PC-9 (cell line): ENCODE measurements at regions of chr2 and their contacts with region 1.

Region 1: GRCh38 chr2:9813312-9814133 is 29.8 kb upstream of the TAF1B start:
- DNase-seq: peak; percentile 23 to 67
- H3K4me3 ChIP-seq: no peak overlapping the region
- H3K27ac ChIP-seq: no peak overlapping the region
- H3K4me1 ChIP-seq: peaks cover 52% of the 10 kb centered on the region
- H3K27me3 ChIP-seq: no peaks in the 10 kb centered on the region
- CTCF ChIP-seq: peak; percentile 97

Region 2: GRCh38 chr2:9830690-9831410 is 17.3 kb after region 1 on chr2:
- CTCF ChIA-PET with region 1: no interaction called
- POLR2A ChIA-PET with region 1: no interaction called
- intact Hi-C with region 1: loop called (anchors 2 kb)
- DNase-seq: peak; percentile 31 to 53
- H3K4me3 ChIP-seq: peak overlapping the region; percentile 41; the same call in 1 of the 2 replicates
- H3K27ac ChIP-seq: peak overlapping the region; percentile 84
- H3K4me1 ChIP-seq: peaks cover 49% of the 10 kb centered on the region
- H3K27me3 ChIP-seq: no peaks in the 10 kb centered on the region
- CTCF ChIP-seq: no peak

Region 3: DNA sequence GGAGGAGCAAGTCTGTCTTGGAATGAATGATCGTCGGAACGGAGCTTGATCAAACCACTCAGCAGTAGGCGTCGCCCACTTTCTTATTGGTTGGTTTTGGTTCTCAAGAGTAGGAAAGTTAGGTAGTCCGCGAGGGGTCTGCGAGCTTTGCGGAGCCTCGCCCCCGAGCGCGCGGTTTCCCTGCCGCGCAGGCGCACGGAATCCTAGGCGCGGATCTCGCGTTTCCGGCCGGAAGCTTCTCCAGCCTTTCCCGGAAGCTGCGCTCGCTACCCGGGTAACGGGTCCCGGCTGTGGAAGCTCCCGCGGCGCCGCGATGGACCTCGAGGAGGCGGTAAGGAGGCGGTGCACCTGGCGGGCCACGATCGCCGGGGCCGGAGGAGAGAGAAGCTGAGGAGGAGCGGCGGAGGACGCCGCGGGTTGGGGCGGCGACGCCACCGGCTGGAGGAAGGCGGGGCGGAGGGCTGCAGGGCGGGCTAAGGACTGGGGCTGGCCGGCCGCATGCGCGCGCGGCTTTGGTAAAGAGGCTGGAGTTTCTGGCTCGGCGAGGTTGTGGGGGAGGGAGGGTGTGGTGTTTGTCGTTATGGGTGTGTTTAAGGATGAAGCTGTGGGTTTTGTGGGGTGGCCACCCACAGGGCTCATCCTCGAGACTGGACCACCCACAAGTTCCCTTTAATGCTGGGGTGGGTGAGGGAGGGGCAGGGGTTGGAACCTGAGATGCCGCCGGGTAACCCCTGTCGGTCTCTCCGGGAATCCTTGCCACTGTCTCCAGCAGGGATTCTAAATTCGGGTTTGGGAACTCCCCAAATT is 29.9 kb after region 1 on chr2 and contains the start of gene TAF1B:
- CTCF ChIA-PET with region 1: no interaction called
- POLR2A ChIA-PET with region 1: interaction called, 4 read pairs
- intact Hi-C with region 1: loop called (anchors 2 kb)
- DNase-seq: peak; percentile 91 to 92
- H3K4me3 ChIP-seq: peak within 1 kb of the TSS; percentile 68
- H3K27ac ChIP-seq: peak within 1 kb of the TSS; percentile 86
- H3K4me1 ChIP-seq: peaks cover 50% of the 10 kb centered on the region
- H3K27me3 ChIP-seq: no peaks in the 10 kb centered on the region
- CTCF ChIP-seq: no peak; the same call in 1 of the 2 replicates
- total RNA-seq, gene TAF1B: 23.8 and 24.8 TPM in 2 replicates

Region 4: DNA sequence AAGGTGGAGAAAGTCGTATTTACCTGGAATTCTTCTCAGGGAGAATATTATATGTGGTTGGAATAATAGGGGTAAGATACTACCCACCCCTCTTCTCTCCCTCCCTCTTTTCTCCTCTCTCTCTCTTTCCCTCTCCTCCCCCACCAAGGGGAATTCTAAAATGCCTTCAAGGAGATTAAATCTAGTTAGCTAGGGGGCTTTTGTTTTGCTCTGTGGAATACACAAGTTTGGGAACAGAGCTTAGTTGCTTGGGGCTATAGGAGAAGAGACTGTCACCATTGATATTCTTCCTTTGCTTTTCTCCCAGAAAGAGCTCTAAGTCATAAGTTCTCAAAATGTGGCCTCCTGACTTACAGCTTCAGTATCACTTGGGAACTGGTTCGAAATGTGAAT is 64.2 kb after region 1 on chr2:
- CTCF ChIA-PET with region 1: interaction called, 10 read pairs
- POLR2A ChIA-PET with region 1: no interaction called
- intact Hi-C with region 1: no loop called
- DNase-seq: no peak
- H3K4me3 ChIP-seq: no peak overlapping the region
- H3K27ac ChIP-seq: no peak overlapping the region
- H3K4me1 ChIP-seq: no peaks in the 10 kb centered on the region
- H3K27me3 ChIP-seq: no peaks in the 10 kb centered on the region
- CTCF ChIP-seq: no peak

Region 5: GRCh38 chr2:9914384-9915065 is 101.0 kb after region 1 on chr2:
- CTCF ChIA-PET with region 1: interaction called, 13 read pairs
- POLR2A ChIA-PET with region 1: no interaction called
- intact Hi-C with region 1: loop called (anchors 1 kb)
- DNase-seq: peak; percentile 53 to 83
- H3K4me3 ChIP-seq: no peak overlapping the region
- H3K27ac ChIP-seq: peak overlapping the region; percentile 50
- H3K4me1 ChIP-seq: peaks cover 9% of the 10 kb centered on the region; the same call in 1 of the 2 replicates
- H3K27me3 ChIP-seq: no peaks in the 10 kb centered on the region
- CTCF ChIP-seq: peak; percentile 60

Region 6: DNA sequence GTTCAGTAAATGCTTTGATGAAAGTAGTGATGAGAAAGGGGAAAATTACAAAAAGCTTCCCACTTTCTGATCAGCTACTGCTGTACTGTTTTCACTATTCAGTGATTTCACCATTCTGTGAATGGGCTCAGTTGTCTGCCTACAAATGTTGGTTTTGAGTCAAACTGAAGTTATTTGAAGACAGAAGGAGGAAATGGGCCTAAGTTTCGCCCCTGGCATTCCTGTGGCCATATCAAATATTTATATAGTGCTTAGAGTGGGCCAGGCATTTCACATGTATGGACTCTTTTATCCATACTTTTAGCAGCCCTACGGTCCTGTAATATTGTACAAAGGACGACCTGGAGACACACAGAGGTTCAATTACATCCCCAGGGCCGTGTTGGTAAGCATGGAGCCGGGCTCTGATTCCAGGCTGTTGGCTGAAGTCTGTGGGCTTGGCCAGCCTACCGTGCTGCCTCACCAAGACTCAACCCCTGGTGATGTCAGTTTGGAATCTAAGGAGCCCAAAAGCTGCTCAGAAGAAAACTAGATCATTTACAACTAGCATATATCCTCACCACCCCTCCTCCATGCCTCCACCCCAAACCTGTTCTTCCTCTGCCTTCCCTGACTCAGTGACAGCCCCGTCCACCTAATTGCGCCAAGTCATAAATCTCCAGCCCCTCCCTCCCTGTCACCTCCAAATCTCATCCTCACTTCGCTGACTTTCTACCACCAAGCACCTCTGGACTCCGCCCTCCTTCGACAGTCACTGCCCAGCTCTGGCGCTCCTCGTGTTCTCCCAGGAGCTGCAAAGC is 127.9 kb after region 1 on chr2:
- CTCF ChIA-PET with region 1: interaction called, 3 read pairs
- POLR2A ChIA-PET with region 1: interaction called, 3 read pairs
- intact Hi-C with region 1: loop called (anchors 5 kb)
- DNase-seq: peak; percentile 80 to 96
- H3K4me3 ChIP-seq: peak overlapping the region; percentile 40; the same call in 1 of the 2 replicates
- H3K27ac ChIP-seq: peak overlapping the region; percentile 97
- H3K4me1 ChIP-seq: peaks cover 74% of the 10 kb centered on the region
- H3K27me3 ChIP-seq: no peaks in the 10 kb centered on the region
- CTCF ChIP-seq: no peak